Gastrocnemius medialis (tissue), 4 donors: ENCODE measurements at regions of chr3 and their contacts with region 1.

Region 1: DNA sequence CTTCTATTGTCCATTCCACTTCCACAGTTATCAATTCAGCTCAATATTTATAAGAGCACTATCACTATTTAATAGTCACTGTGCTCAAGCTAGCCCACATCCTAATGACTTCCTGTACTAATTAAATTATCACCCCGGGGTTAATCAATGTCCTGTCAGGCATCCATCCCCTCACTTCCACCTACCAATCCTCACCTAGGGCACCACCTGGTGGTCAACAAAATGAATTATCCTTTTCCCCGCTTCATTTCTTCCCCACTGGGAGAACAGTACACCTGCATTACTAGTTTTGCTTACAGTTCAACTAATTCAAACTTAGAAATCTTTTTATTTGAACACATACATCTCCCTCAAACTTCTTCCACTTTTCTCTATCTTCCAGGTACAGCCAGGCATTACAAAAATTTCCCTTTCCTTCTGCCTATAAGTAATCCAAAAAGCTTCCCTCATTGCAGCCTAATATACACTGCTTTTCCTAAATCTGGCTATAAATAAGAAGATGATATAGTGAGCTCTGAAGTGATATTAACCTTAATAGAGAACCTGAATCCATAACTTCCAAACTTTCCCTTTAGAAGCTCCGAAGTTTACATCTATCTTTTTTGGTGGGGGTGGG is 68.5 kb downstream of the TMCC1 start:
- DNase-seq: peak in 1 of 2 donors; percentile 20
- ATAC-seq: peak in 1 of 2 donors; percentile 41
- H3K4me3 ChIP-seq: no peak overlapping the region
- H3K27ac ChIP-seq: no peak overlapping the region
- H3K4me1 ChIP-seq: peaks cover 0 to 7% of the 10 kb centered on the region in 2 donors
- H3K27me3 ChIP-seq: no peaks in the 10 kb centered on the region
- CTCF ChIP-seq: peak; percentile 65 to 81 (median 76)
- POLR2A ChIP-seq: no peak

Region 2: GRCh38 chr3:129383292-129383860 is 441.7 kb before region 1 on chr3:
- in situ Hi-C with region 1: no loop called
- intact Hi-C with region 1: loop called (anchors 5 kb)
- DNase-seq: peak in 1 of 2 donors; percentile 32
- ATAC-seq: peak; percentile 64 to 81
- H3K4me3 ChIP-seq: no peak overlapping the region
- H3K27ac ChIP-seq: no peak overlapping the region
- H3K4me1 ChIP-seq: peaks cover 4 to 10% of the 10 kb centered on the region in 2 donors
- H3K27me3 ChIP-seq: no peaks in the 10 kb centered on the region
- CTCF ChIP-seq: peak; percentile 41 to 77 (median 63)
- POLR2A ChIP-seq: no peak

Region 3: GRCh38 chr3:129627429-129628168 is 197.4 kb before region 1 on chr3:
- in situ Hi-C with region 1: no loop called
- intact Hi-C with region 1: loop called (anchors 1 kb)
- DNase-seq: peak; percentile 49 to 71
- ATAC-seq: peak; percentile 57 to 61
- H3K4me3 ChIP-seq: peak overlapping the region; percentile 77 to 97 (median 88)
- H3K27ac ChIP-seq: peak overlapping the region; percentile 95 to 99 (median 97)
- H3K4me1 ChIP-seq: peaks cover 39 to 41% of the 10 kb centered on the region in 2 donors
- H3K27me3 ChIP-seq: no peaks in the 10 kb centered on the region
- CTCF ChIP-seq: peak; percentile 77 to 87 (median 83)
- POLR2A ChIP-seq: no peak

Region 4: DNA sequence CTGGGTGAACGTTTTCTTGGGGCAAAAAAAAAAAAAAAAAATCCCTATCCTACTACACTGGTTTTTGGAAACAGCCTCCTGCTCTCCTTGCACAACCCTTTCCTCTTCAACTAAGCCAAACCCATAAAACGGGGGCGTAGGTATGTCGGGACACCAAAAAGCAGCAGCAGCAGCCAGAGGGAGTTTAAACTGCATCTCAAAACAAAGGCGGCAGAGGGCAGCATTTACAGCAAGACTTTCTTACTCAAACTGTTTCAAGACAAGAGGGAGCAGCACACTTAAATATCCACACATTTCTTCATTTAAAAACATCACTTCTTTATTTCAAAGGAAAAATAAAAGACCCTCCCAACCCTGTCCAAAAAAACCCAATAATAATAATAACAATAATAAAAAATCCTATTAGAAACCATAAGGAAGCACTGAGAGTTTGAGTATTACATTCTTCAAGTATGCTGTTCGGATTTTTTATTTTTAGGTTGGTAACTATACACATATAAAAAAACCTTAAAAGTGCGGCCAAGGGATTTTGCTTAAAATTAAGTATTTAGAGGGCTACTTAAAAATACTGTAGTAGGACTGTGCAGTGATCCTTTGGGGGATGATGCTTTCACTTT is 174.7 kb before region 1 on chr3:
- in situ Hi-C with region 1: loop called (anchors 5 to 10 kb)
- intact Hi-C with region 1: loop called (anchors 1 kb)
- DNase-seq: peak; percentile 35 to 71
- ATAC-seq: peak; percentile 46 to 70
- H3K4me3 ChIP-seq: no peak overlapping the region
- H3K27ac ChIP-seq: peak overlapping the region in 1 of 4 donors; percentile 9
- H3K4me1 ChIP-seq: peaks cover 26 to 35% of the 10 kb centered on the region in 2 donors
- H3K27me3 ChIP-seq: no peaks in the 10 kb centered on the region
- CTCF ChIP-seq: peak; percentile 51 to 81 (median 71)
- POLR2A ChIP-seq: no peak

Region 5: DNA sequence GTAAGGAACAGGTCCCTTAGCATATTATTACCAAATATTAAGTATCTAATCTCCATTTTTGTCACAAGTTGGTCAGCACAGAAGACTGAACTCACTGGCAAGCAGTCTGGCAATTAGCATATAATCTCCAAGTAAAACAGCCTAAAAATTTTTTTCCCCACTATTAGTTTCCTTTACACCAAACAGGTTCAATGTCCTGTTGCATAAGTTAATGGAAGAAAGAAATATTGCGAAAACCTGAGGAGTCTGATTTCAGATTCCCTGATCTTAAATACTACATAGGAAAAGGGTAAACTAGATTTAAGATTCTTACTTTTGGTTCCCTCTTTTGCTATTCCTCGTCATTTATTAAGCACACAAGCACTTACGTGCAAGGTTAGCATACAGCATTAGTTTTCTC is 85.4 kb before region 1 on chr3:
- in situ Hi-C with region 1: no loop called
- intact Hi-C with region 1: loop called (anchors 5 kb)
- DNase-seq: no peak
- ATAC-seq: no peak
- H3K4me3 ChIP-seq: no peak overlapping the region
- H3K27ac ChIP-seq: no peak overlapping the region
- H3K4me1 ChIP-seq: peaks cover 13 to 29% of the 10 kb centered on the region in 2 donors
- H3K27me3 ChIP-seq: no peaks in the 10 kb centered on the region
- CTCF ChIP-seq: no peak
- POLR2A ChIP-seq: no peak

Region 6: GRCh38 chr3:129892857-129893580 is 68.0 kb after region 1 on chr3:
- in situ Hi-C with region 1: no loop called
- intact Hi-C with region 1: no loop called
- DNase-seq: no peak
- ATAC-seq: peak; percentile 67 to 68
- H3K4me3 ChIP-seq: peak overlapping the region; percentile 92 to 97 (median 96)
- H3K27ac ChIP-seq: peak overlapping the region; percentile 97 to 98 (median 97)
- H3K4me1 ChIP-seq: peaks cover 49 to 52% of the 10 kb centered on the region in 2 donors
- H3K27me3 ChIP-seq: no peaks in the 10 kb centered on the region
- CTCF ChIP-seq: peak in 2 of 5 experiments; percentile 14 to 27
- POLR2A ChIP-seq: peak; percentile 60